ENCODE measurements at regions of chr6 and their contacts with region 1.

Region 1: GRCh38 chr6:26537846-26538571 is at the start of gene HMGN4:
- DNase-seq: peak; percentile 78
- ATAC-seq: peak; percentile 69
- H3K4me3 Mint-ChIP-seq: peak within 1 kb of the TSS; percentile 94
- H3K27ac Mint-ChIP-seq: peak within 1 kb of the TSS; percentile 97
- H3K4me1 Mint-ChIP-seq: peaks cover 46% of the 10 kb centered on the region
- H3K27me3 Mint-ChIP-seq: no peaks in the 10 kb centered on the region
- total RNA-seq, gene HMGN4: 83.1 to 86.4 TPM

Region 2: GRCh38 chr6:26149240-26149639 is 388.8 kb before region 1 on chr6:
- POLR2A ChIA-PET with region 1: no interaction called
- DNase-seq: no peak
- ATAC-seq: no peak
- H3K4me3 Mint-ChIP-seq: no peak overlapping the region
- H3K27ac Mint-ChIP-seq: no peak overlapping the region
- H3K4me1 Mint-ChIP-seq: peaks cover 3% of the 10 kb centered on the region
- H3K27me3 Mint-ChIP-seq: no peaks in the 10 kb centered on the region

Region 3: DNA sequence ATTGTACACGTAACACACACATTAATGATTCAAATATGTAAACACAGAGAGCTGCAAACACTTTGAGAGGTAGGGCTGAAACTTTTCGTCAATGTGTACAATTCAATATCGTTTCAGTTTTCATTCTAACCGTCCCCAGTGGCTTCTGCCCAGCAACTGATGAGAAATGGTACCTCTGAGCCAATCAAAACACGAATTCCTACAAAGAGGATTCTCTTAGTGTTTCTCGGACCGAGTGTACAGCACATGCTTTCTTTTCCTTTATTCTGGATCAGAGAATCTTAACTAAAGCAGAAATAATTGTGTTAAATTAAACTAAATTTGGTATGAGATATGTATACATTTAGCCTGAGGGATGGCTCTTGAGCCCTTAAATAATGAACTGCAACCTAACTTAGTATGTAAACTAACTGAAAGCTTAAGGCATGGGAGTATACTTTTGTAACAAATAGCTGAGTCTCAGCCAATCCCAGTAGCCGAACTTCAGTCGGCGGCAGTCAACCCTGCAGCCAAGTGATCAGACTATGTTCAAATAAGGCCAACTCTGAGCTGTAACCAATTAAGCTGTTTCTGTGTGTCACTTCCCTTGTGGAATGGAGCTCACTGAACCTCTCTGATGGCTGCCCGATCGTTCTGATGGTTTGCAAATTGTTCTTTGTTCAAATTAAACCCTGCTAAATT is 64.1 kb before region 1 on chr6:
- POLR2A ChIA-PET with region 1: interaction called, 21 read pairs
- DNase-seq: peak; percentile 59
- ATAC-seq: peak; percentile 94
- H3K4me3 Mint-ChIP-seq: peak overlapping the region; percentile 96
- H3K27ac Mint-ChIP-seq: peak overlapping the region; percentile 99
- H3K4me1 Mint-ChIP-seq: peaks cover 22% of the 10 kb centered on the region
- H3K27me3 Mint-ChIP-seq: no peaks in the 10 kb centered on the region

Region 4: GRCh38 chr6:26553635-26554446 is 15.8 kb after region 1 on chr6:
- POLR2A ChIA-PET with region 1: interaction called, 24 read pairs
- DNase-seq: peak; percentile 83
- ATAC-seq: peak; percentile 57
- H3K4me3 Mint-ChIP-seq: no peak overlapping the region
- H3K27ac Mint-ChIP-seq: no peak overlapping the region
- H3K4me1 Mint-ChIP-seq: peaks cover 19% of the 10 kb centered on the region
- H3K27me3 Mint-ChIP-seq: no peaks in the 10 kb centered on the region

Measured in activated naive CD8-positive, alpha-beta T cell treated with anti-CD3 and anti-CD28 coated beads, Interleukin-2, amount 10 ng/mL, durations not matched to agents 7 days and 5 days (primary cell).